A673 (cell line): ENCODE measurements at regions of chr19 and their contacts with region 1.

Region 1: DNA sequence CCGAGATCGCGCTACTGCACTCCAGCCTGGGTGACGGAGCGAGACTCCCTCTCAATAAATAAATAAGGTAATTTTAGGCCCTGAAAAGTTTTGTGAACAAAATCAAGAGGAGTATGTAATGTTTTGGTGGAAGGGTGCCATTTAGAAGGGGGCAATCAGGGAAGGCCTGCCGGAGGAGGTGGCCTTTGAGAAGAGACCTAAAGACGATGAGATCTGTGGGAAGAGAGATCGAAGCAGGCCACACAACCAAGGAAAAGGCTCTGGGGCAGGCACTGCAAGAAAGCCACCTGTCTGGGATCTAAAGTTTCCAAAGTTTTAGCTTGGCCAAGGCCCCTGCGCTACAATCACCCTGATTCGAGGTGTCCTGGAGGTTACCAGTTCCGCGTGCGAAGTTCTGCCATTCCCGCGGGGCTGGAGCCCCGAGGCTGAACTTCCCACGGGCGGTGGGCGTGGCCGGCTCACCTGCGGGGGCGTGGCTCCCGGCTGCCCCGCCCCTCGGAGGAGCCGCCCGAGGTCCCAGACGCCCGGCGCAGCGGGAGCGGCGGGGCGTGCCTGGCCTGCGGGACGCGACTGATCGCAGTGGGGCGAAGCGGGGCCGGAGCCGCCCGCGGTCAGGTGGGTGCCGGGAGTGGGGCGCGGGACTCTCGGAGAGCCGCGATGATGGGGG is at the start of gene KLC3:
- DNase-seq: no peak
- H3K4me3 ChIP-seq: peak within 1 kb of the TSS; percentile 48
- H3K27ac ChIP-seq: no peak within 1 kb of the TSS
- H3K4me1 ChIP-seq: peaks cover 5% of the 10 kb centered on the region
- H3K27me3 ChIP-seq: no peaks in the 10 kb centered on the region
- CTCF ChIP-seq: no peak
- total RNA-seq, gene KLC3: 0.44 and 0.49 TPM in 2 replicates

Region 2: DNA sequence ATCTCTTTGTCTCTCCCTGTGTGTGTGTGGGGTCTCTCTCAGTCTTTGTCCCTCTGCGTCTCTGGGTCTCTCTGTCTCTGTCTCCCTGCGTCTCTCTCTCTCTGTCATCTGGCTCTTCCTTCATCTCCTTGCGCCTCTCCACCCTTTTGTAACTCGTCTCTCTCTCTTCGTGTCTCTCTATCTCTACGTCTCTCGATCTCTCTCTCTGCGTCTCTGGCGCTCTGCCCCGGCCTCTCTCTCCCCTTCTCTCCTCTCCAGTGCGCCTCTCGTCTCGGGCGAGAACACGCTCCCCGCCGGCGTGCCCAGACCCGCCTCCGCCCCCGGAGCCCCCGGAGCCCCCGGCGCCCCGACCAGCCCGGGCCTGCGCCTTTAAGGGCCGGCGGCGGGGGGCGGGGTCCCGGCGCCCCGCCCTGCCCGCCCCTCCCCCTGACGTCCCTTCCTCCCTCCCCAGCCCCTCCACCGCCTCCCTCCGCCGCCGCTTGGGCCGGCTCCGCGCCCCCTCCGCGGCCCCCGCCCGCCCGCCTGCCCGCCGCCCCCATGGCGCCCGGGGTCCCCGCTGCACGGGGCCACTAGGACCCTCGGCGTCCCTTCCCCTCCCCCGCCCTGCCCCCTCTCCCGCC is 89.4 kb before region 1 on chr19 and contains the start of gene MARK4:
- CTCF ChIA-PET with region 1: no interaction called
- POLR2A ChIA-PET with region 1: no interaction called
- intact Hi-C with region 1: loop called (anchors 1 kb)
- DNase-seq: peak; percentile 72
- H3K4me3 ChIP-seq: peak within 1 kb of the TSS; percentile 93
- H3K27ac ChIP-seq: peak within 1 kb of the TSS; percentile 86
- H3K4me1 ChIP-seq: peaks cover 5% of the 10 kb centered on the region
- H3K27me3 ChIP-seq: no peaks in the 10 kb centered on the region
- CTCF ChIP-seq: no peak
- total RNA-seq, gene MARK4: 44.0 and 46.4 TPM in 2 replicates